ENCODE measurements at regions of chr19 and their contacts with region 1.

Region 1: DNA sequence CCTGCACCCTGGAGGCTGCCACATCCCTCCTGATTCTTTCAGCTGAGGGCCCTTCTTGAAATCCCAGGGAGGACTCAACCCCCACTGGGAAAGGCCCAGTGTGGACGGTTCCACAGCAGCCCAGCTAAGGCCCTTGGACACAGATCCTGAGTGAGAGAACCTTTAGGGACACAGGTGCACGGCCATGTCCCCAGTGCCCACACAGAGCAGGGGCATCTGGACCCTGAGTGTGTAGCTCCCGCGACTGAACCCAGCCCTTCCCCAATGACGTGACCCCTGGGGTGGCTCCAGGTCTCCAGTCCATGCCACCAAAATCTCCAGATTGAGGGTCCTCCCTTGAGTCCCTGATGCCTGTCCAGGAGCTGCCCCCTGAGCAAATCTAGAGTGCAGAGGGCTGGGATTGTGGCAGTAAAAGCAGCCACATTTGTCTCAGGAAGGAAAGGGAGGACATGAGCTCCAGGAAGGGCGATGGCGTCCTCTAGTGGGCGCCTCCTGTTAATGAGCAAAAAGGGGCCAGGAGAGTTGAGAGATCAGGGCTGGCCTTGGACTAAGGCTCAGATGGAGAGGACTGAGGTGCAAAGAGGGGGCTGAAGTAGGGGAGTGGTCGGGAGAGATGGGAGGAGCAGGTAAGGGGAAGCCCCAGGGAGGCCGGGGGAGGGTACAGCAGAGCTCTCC is 6.9 kb upstream of the CEACAM5 start:
- DNase-seq: no peak
- ATAC-seq: 0 out of 2 replicates have a peak, but pooled peaks have one; percentile 21
- H3K4me3 ChIP-seq: no peak overlapping the region
- H3K27ac ChIP-seq: no peak overlapping the region
- H3K4me1 ChIP-seq: peaks cover 0 to 7% of the 10 kb centered on the region in 2 experiments; a peak in 2 of 4 replicates
- H3K27me3 ChIP-seq: peaks cover 51% of the 10 kb centered on the region; the same call in 1 of the 2 replicates
- CTCF ChIP-seq: peak; percentile 23 to 70 (median 65); a peak in 5 of 6 replicates
- POLR2A ChIP-seq: no peak
- RAD21 ChIP-seq: peak; percentile 46; the same call in 1 of the 2 replicates

Region 2: DNA sequence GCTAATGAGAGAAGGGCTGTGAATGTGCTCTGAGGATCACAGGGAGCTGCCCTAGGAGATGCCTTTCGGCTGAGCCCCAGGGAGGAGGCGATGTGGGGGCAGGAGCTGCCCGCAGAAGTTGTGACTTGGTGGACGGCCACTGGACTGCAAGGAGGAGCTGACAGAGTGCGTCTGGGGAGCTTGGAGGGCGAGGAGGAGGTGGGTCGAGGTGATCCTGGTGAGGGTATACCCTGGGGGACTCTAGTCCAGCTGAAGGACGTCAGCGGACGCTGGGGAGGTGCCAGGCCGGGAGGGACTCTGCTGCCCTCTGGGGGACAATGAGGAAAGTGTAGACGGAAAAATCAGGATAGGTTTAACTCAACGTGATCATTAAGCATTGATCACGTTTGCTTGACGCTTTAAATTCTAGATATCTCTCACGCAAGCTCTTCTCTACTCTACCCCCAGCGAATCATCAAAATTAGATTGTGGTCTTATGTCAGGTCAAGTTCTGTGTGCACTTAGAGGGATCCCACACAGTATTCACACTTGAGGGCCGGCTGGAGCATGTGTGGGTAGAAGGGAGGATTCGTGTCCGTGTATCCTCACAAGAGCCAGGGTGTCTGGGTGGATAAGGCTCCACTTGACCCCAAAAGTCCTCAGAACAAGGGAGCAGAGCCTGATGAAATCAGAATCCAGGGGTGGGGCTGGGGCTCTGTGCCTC is 10.1 kb before region 1 on chr19:
- CTCF ChIA-PET with region 1: interaction called, 25 read pairs
- POLR2A ChIA-PET with region 1: no interaction called
- RAD21 ChIA-PET with region 1: no interaction called
- intact Hi-C with region 1: no loop called
- DNase-seq: no peak
- ATAC-seq: peak; percentile 90
- H3K4me3 ChIP-seq: no peak overlapping the region
- H3K27ac ChIP-seq: no peak overlapping the region
- H3K4me1 ChIP-seq: peaks cover 0 to 5% of the 10 kb centered on the region in 2 experiments; a peak in 1 of 4 replicates
- H3K27me3 ChIP-seq: peaks cover 39% of the 10 kb centered on the region
- CTCF ChIP-seq: peak; percentile 54 to 83 (median 83)
- POLR2A ChIP-seq: no peak
- RAD21 ChIP-seq: peak; percentile 44

Measured in HCT116 (cell line).